Thyroid gland (tissue), 4 donors: ENCODE measurements at regions of chr3 and their contacts with region 1.

Region 1: DNA sequence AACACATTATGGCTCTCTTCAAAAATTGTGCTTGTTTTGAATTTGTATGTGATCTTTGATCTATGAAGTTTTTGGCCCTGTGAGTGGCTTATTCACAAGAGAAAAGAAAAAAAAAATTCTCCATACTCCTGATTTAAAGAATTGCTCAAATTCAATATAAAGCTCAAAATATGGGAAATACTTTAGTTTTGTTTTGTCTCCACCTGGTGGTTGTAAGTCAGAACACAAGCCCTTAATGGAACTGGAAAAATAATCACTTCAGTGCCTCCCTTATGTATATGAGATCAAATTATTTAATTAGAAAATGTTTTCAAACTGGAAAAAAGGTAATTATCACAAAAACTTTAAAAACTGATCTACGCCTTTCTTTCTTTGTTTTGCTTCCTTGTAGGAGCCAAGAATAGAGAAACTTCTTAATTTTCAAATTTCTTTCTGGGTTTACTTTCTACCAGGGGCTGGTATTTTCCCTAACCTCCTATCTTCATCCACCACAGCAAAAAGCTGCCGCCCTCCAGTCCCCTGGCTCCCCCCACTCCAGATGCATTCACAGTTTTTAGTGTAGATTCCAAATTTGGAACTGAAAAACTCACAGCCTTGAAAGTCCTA is 50.6 kb downstream of the SERP1 start:
- DNase-seq: no peak
- H3K4me3 ChIP-seq: no peak overlapping the region
- H3K27ac ChIP-seq: no peak overlapping the region
- H3K4me1 ChIP-seq: no peaks in the 10 kb centered on the region
- H3K27me3 ChIP-seq: no peaks in the 10 kb centered on the region
- CTCF ChIP-seq: peak; percentile 55 to 87 (median 68)
- POLR2A ChIP-seq: no peak

Region 2: GRCh38 chr3:150227839-150228238 is 267.8 kb before region 1 on chr3:
- intact Hi-C with region 1: loop called (anchors 5 kb)
- DNase-seq: peak; percentile 68 to 75
- H3K4me3 ChIP-seq: no peak overlapping the region
- H3K27ac ChIP-seq: no peak overlapping the region
- H3K4me1 ChIP-seq: no peaks in the 10 kb centered on the region
- H3K27me3 ChIP-seq: no peaks in the 10 kb centered on the region
- CTCF ChIP-seq: peak; percentile 52 to 89 (median 74)
- POLR2A ChIP-seq: no peak

Region 3: GRCh38 chr3:150286390-150287147 is 209.1 kb before region 1 on chr3:
- intact Hi-C with region 1: loop called (anchors 5 kb)
- DNase-seq: peak; percentile 6 to 19
- H3K4me3 ChIP-seq: no peak overlapping the region
- H3K27ac ChIP-seq: peak overlapping the region in 2 of 3 donors; percentile 33 to 57
- H3K4me1 ChIP-seq: peaks cover 0 to 4% of the 10 kb centered on the region in 2 donors
- H3K27me3 ChIP-seq: no peaks in the 10 kb centered on the region
- CTCF ChIP-seq: peak; percentile 47 to 86 (median 60)
- POLR2A ChIP-seq: no peak

Region 4: GRCh38 chr3:150391200-150391599 is 104.5 kb before region 1 on chr3:
- intact Hi-C with region 1: no loop called
- DNase-seq: no peak
- H3K4me3 ChIP-seq: no peak overlapping the region
- H3K27ac ChIP-seq: no peak overlapping the region
- H3K4me1 ChIP-seq: no peaks in the 10 kb centered on the region
- H3K27me3 ChIP-seq: no peaks in the 10 kb centered on the region
- CTCF ChIP-seq: no peak
- POLR2A ChIP-seq: no peak

Region 5: DNA sequence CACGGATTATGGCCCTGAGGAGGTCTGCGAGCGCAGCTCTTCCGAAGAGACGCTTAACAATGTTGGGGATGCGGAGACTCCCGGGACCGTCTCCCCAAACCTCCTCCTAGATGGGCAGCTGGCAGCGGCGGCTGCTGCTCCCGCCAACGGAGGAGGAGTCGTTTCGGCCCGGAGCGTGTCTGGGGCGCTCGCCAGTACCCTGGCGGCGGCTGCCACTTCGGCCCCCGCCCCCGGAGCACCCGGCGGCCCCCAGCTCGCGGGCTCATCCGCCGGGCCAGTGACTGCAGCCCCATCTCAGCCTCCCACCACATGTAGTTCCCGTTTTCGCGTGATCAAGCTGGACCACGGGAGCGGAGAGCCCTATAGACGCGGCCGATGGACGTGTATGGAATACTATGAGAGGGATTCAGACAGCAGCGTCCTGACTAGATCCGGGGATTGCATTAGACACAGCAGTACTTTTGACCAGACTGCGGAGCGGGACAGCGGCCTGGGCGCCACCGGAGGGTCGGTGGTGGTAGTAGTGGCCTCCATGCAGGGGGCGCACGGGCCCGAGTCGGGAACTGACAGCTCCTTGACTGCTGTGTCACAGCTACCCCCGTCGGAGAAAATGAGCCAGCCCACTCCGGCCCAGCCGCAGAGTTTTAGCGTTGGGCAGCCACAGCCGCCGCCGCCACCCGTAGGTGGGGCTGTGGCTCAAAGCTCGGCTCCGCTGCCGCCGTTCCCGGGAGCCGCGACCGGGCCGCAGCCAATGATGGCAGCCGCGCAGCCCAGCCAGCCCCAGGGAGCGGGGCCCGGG is 86.0 kb before region 1 on chr3:
- intact Hi-C with region 1: loop called (anchors 5 kb)
- DNase-seq: peak; percentile 76 to 80
- H3K4me3 ChIP-seq: peak overlapping the region; percentile 87 to 94 (median 94)
- H3K27ac ChIP-seq: peak overlapping the region; percentile 99 to 100 (median 100)
- H3K4me1 ChIP-seq: peaks cover 13 to 18% of the 10 kb centered on the region in 2 donors
- H3K27me3 ChIP-seq: no peaks in the 10 kb centered on the region
- CTCF ChIP-seq: peak in 5 of 6 experiments; percentile 43 to 63 (median 51)
- POLR2A ChIP-seq: peak in 1 of 2 donors; percentile 53